ENCODE measurements at regions of chr6 and their contacts with region 1.

Region 1: DNA sequence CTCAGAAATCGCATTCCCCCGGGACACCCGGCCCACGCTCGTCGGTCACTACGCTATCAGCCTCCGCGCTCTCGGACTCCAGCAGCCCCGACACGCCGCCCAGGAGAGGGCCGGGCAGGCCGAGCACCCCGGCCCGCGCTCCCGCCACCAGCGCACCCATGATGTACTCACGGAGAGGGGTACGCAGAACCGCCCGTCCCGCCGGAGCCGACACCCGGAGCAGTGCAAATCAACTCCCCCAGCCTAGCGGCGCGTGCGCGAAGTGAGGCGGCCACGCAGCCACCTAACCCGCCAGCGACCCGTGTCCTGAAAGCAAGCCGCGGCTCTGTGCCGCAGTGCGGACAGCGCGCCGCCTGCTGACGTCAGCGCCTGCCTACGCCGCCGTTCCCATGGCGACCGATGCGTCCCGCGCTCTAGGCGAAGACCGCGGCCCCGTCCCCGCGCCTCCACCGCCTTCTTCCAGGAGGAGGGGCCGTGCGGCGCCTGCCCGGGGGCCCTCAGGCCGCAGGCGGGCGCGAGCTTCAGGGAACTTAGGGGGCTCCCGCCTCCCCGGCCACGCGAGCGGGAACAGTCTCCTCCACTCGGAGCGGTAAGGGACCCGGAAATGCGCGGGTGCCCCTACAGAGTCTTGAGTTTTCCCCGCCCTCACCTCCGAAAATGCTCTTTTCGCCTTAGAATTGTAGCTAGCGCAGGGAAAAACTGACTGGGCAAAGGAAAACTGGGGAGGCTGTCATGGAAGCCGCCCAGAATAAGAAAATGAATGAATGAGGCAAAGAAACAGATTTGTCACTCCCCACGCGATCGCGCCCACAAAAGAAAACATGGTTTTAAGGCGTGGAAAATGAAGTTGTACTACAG is at the start of gene AHI1:
- DNase-seq: peak; percentile 85
- H3K4me3 Mint-ChIP-seq: no peak within 1 kb of the TSS
- H3K27ac Mint-ChIP-seq: no peak within 1 kb of the TSS
- H3K4me1 Mint-ChIP-seq: peaks cover 20% of the 10 kb centered on the region
- H3K27me3 Mint-ChIP-seq: no peaks in the 10 kb centered on the region
- total RNA-seq, gene AHI1: 142 and 146 TPM in 2 replicates

Region 2: GRCh38 chr6:135451693-135452092 is 45.9 kb before region 1 on chr6:
- intact Hi-C with region 1: loop called (anchors 2 kb)
- DNase-seq: no peak
- H3K4me3 Mint-ChIP-seq: no peak overlapping the region
- H3K27ac Mint-ChIP-seq: no peak overlapping the region
- H3K4me1 Mint-ChIP-seq: peaks cover 5% of the 10 kb centered on the region
- H3K27me3 Mint-ChIP-seq: no peaks in the 10 kb centered on the region

Region 3: DNA sequence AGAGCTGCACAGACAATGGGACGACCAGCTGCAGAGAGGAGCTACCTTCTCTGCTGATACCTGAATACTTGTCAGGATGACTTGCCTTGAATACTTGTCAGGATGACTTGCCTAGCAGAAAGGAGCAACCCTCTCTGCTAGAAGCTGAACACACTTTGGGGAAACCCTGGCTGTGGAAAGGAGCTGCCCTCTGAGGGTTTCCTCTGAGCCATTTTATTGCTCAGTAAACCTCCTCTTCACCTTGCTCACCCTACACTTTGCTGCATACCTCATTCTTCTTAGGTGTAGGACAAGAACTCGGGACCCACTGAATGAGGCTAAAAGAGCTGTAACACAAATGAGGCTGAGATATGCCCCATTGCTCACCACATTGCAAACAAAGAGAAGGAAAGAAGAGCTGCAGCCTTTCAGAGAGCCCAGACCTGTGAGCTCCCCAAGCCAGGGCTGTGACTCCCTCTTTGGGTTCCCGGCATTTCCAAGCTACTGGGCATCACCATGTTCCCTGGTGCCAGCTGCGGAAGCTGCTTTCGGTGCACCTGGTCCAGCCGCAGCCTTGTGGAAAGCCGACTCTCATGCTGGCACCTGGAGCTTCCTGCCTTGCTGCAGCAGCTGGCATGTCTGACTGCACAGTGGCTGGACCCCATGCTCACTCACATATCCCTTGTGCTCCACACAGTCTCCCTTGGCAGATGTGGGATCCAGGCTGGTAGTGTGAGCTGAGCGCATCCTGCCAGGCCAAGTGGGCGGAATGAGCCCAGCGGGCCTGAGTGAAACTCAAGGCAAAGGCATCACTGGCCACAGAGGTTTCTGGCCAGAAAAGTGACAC is 106.6 kb after region 1 on chr6:
- intact Hi-C with region 1: loop called (anchors 1 kb)
- DNase-seq: no peak
- H3K4me3 Mint-ChIP-seq: no peak overlapping the region
- H3K27ac Mint-ChIP-seq: peak overlapping the region; percentile 90
- H3K4me1 Mint-ChIP-seq: peaks cover 46% of the 10 kb centered on the region
- H3K27me3 Mint-ChIP-seq: no peaks in the 10 kb centered on the region

Region 4: DNA sequence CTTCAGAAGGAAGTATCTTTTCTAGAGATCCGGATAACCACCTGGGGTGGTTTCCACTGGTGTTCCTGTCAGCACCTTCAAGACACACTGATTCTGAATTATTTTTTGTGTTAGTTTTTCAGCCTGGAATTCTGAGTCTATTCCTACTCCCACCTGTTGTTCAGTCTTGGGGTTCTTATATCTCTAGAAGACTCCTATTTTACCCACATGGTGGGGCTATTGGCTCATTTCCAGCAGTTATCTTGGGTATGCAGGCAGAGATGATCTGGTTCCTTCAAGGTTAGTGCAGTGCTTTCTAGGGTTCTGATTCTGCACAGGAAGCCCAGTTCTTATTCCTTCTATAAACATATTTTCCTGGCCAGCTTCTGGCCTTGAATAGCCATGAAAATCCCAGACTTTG is 178.2 kb after region 1 on chr6:
- intact Hi-C with region 1: loop called (anchors 2 kb)
- DNase-seq: peak; percentile 12
- H3K4me3 Mint-ChIP-seq: no peak overlapping the region
- H3K27ac Mint-ChIP-seq: peak overlapping the region; percentile 62
- H3K4me1 Mint-ChIP-seq: peaks cover 49% of the 10 kb centered on the region
- H3K27me3 Mint-ChIP-seq: no peaks in the 10 kb centered on the region

Region 5: GRCh38 chr6:136249811-136250685 is 752.4 kb after region 1 on chr6 and contains the start of gene MTFR2:
- intact Hi-C with region 1: loop called (anchors 1 kb)
- DNase-seq: peak; percentile 95
- H3K4me3 Mint-ChIP-seq: peak within 1 kb of the TSS; percentile 98
- H3K27ac Mint-ChIP-seq: peak within 1 kb of the TSS; percentile 92
- H3K4me1 Mint-ChIP-seq: peaks cover 66% of the 10 kb centered on the region
- H3K27me3 Mint-ChIP-seq: no peaks in the 10 kb centered on the region
- total RNA-seq, gene MTFR2: 23.3 and 27.6 TPM in 2 replicates

Region 6: GRCh38 chr6:136550330-136551071 is 1052.9 kb after region 1 on chr6 and contains the start of gene MAP7:
- intact Hi-C with region 1: loop called (anchors 10 kb)
- DNase-seq: peak; percentile 53
- H3K4me3 Mint-ChIP-seq: peak within 1 kb of the TSS; percentile 74
- H3K27ac Mint-ChIP-seq: no peak within 1 kb of the TSS
- H3K4me1 Mint-ChIP-seq: peaks cover 15% of the 10 kb centered on the region
- H3K27me3 Mint-ChIP-seq: peaks cover 48% of the 10 kb centered on the region
- total RNA-seq, gene MAP7: 1.7 and 2.3 TPM in 2 replicates